ENCODE measurements at regions of chrX and their contacts with region 1.

Region 1: DNA sequence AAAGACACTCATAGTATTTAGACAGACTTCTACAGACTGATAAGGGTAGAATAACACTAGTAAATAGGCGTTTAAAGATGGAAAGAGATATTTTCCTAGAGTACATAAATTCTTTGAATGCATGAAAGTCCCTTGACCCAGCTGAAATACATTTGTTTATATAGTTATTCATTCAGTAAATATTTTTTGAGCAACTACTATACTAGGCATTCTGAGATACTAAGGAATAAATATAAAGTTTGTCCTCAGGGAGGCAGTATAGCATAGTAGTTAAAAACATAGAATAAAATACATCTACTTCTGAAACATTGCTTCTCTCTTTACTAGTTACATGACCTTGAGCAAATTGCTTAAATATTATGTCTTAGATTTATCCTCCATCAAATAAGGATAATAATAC is 27.4 kb downstream of the HMGN5 start:
- DNase-seq: no peak
- H3K4me3 ChIP-seq: no peak overlapping the region
- H3K27ac ChIP-seq: no peak overlapping the region
- H3K4me1 ChIP-seq: no peaks in the 10 kb centered on the region
- H3K27me3 ChIP-seq: peaks cover 0 to 7% (median 0%) of the 10 kb centered on the region in 7 donors
- CTCF ChIP-seq: peak in 4 of 11 experiments; percentile 9 to 33 (median 27)
- POLR2A ChIP-seq: no peak

Region 2: GRCh38 chrX:80708781-80709180 is 465.5 kb before region 1 on chrX:
- intact Hi-C with region 1: no loop called
- DNase-seq: no peak
- H3K4me3 ChIP-seq: no peak overlapping the region
- H3K27ac ChIP-seq: no peak overlapping the region
- H3K4me1 ChIP-seq: no peaks in the 10 kb centered on the region
- H3K27me3 ChIP-seq: no peaks in the 10 kb centered on the region
- CTCF ChIP-seq: no peak
- POLR2A ChIP-seq: no peak

Region 3: GRCh38 chrX:81377329-81377728 is 203.0 kb after region 1 on chrX:
- intact Hi-C with region 1: loop called (anchors 10 kb)
- DNase-seq: no peak
- H3K4me3 ChIP-seq: no peak overlapping the region
- H3K27ac ChIP-seq: no peak overlapping the region
- H3K4me1 ChIP-seq: no peaks in the 10 kb centered on the region
- H3K27me3 ChIP-seq: no peaks in the 10 kb centered on the region
- CTCF ChIP-seq: peak in 9 of 11 experiments; percentile 14 to 62 (median 43)
- POLR2A ChIP-seq: no peak

Region 4: GRCh38 chrX:81791086-81791485 is 616.8 kb after region 1 on chrX:
- intact Hi-C with region 1: no loop called
- DNase-seq: no peak
- H3K4me3 ChIP-seq: no peak overlapping the region
- H3K27ac ChIP-seq: no peak overlapping the region
- H3K4me1 ChIP-seq: no peaks in the 10 kb centered on the region
- H3K27me3 ChIP-seq: peaks cover 0 to 11% (median 0%) of the 10 kb centered on the region in 7 donors
- CTCF ChIP-seq: no peak
- POLR2A ChIP-seq: no peak

Region 5: GRCh38 chrX:81900522-81900921 is 726.2 kb after region 1 on chrX:
- intact Hi-C with region 1: no loop called
- DNase-seq: no peak
- H3K4me3 ChIP-seq: no peak overlapping the region
- H3K27ac ChIP-seq: no peak overlapping the region
- H3K4me1 ChIP-seq: no peaks in the 10 kb centered on the region
- H3K27me3 ChIP-seq: no peaks in the 10 kb centered on the region
- CTCF ChIP-seq: no peak
- POLR2A ChIP-seq: no peak

Measured in spleen (tissue), 13 donors.